ENCODE measurements at regions of chr14 and their contacts with region 1.

Region 1: GRCh38 chr14:77320238-77320935 is at the start of gene POMT2:
- DNase-seq: peak; percentile 87 to 94 (median 91)
- ATAC-seq: peak; percentile 71
- H3K4me3 ChIP-seq: peak within 1 kb of the TSS; percentile 97
- H3K4me3 Mint-ChIP-seq: peak within 1 kb of the TSS; percentile 94 to 99 (median 98)
- H3K27ac ChIP-seq: peak within 1 kb of the TSS; percentile 93
- H3K27ac Mint-ChIP-seq: peak within 1 kb of the TSS; percentile 95 to 99 (median 99)
- H3K4me1 ChIP-seq: peaks cover 0 to 6% of the 10 kb centered on the region in 2 donors
- H3K4me1 Mint-ChIP-seq: peaks cover 12 to 21% (median 16%) of the 10 kb centered on the region in 7 donors
- H3K27me3 ChIP-seq: no peaks in the 10 kb centered on the region
- H3K27me3 Mint-ChIP-seq: no peaks in the 10 kb centered on the region
- total RNA-seq, gene POMT2: 6.9 to 15.3 (median 9.4) TPM

Region 2: DNA sequence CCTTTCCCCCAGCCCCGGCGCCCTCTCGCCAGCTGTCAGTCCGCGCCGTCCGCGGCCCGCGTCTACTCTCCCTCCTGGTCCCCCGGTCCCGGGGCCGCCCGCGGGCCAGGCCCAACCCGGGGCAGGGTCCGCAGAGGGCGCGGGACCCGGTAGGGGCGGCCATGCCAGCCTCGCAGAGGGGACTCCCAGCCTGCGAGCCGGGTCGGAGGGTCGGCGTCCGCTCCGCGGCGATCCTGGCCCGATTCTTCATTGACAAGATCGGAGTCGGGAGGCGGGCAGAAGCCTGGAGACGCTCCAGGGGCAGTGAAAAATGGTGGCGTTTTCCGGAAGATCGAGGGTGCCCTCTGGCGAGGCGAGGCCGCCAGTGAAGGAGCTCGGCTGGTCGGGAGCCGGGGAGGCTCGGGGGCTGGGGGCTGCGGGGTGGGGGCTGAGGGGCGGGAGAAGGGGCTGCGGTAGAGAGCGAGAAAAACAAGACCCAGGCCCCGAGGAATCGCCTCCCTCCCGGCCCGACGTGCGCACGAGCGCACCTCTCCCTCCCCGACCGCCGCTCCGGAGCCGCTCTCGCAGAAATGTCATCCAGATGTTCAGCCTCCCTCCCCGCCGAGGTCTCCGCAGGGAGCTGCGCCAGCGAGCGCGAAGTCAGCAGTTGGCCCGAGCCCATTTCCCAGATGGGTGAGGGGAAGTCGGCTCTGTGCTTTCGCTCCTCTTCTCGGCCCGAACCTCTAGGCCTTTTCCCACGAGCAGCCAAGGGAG is 1337.9 kb before region 1 on chr14:
- CTCF ChIA-PET with region 1: no interaction called
- POLR2A ChIA-PET with region 1: no interaction called
- intact Hi-C with region 1: loop called in 1 of 2 experiments (anchors 1 kb)
- DNase-seq: peak; percentile 69 to 83 (median 80)
- ATAC-seq: peak; percentile 83
- H3K4me3 ChIP-seq: peak overlapping the region; percentile 83
- H3K4me3 Mint-ChIP-seq: peak overlapping the region; percentile 80 to 99 (median 88)
- H3K27ac ChIP-seq: peak overlapping the region; percentile 84
- H3K27ac Mint-ChIP-seq: peak overlapping the region; percentile 58 to 97 (median 90)
- H3K4me1 ChIP-seq: peaks cover 18 to 32% of the 10 kb centered on the region in 2 donors
- H3K4me1 Mint-ChIP-seq: peaks cover 43 to 64% (median 56%) of the 10 kb centered on the region in 7 donors
- H3K27me3 ChIP-seq: no peaks in the 10 kb centered on the region
- H3K27me3 Mint-ChIP-seq: peaks cover 0 to 24% (median 0%) of the 10 kb centered on the region in 5 donors

Region 3: GRCh38 chr14:76876076-76876475 is 444.3 kb before region 1 on chr14:
- CTCF ChIA-PET with region 1: interaction called, 7 read pairs
- POLR2A ChIA-PET with region 1: no interaction called
- intact Hi-C with region 1: loop called in 1 of 2 experiments (anchors 1 kb)
- DNase-seq: peak in 7 of 9 donors; percentile 23 to 50 (median 37)
- ATAC-seq: peak; percentile 73
- H3K4me3 ChIP-seq: no peak overlapping the region
- H3K4me3 Mint-ChIP-seq: no peak overlapping the region
- H3K27ac ChIP-seq: no peak overlapping the region
- H3K27ac Mint-ChIP-seq: peak overlapping the region in 1 of 9 donors; percentile 69
- H3K4me1 ChIP-seq: no peaks in the 10 kb centered on the region
- H3K4me1 Mint-ChIP-seq: peaks cover 0 to 3% (median 0%) of the 10 kb centered on the region in 7 donors
- H3K27me3 ChIP-seq: no peaks in the 10 kb centered on the region
- H3K27me3 Mint-ChIP-seq: no peaks in the 10 kb centered on the region

Region 4: GRCh38 chr14:77028384-77029231 is 291.8 kb before region 1 on chr14 and contains the start of gene IRF2BPL:
- CTCF ChIA-PET with region 1: no interaction called
- POLR2A ChIA-PET with region 1: interaction called, 6 read pairs
- intact Hi-C with region 1: loop called in 1 of 2 experiments (anchors 1 kb)
- DNase-seq: peak; percentile 90 to 96 (median 94)
- ATAC-seq: peak; percentile 82
- H3K4me3 ChIP-seq: peak within 1 kb of the TSS; percentile 81
- H3K4me3 Mint-ChIP-seq: peak within 1 kb of the TSS; percentile 93 to 99 (median 98)
- H3K27ac ChIP-seq: peak within 1 kb of the TSS; percentile 98
- H3K27ac Mint-ChIP-seq: peak within 1 kb of the TSS; percentile 97 to 100 (median 99)
- H3K4me1 ChIP-seq: peaks cover 43 to 57% of the 10 kb centered on the region in 2 donors
- H3K4me1 Mint-ChIP-seq: peaks cover 33 to 65% (median 58%) of the 10 kb centered on the region in 7 donors
- H3K27me3 ChIP-seq: no peaks in the 10 kb centered on the region
- H3K27me3 Mint-ChIP-seq: no peaks in the 10 kb centered on the region
- total RNA-seq, gene IRF2BPL: 30.2 to 45.2 (median 34.6) TPM

Region 5: DNA sequence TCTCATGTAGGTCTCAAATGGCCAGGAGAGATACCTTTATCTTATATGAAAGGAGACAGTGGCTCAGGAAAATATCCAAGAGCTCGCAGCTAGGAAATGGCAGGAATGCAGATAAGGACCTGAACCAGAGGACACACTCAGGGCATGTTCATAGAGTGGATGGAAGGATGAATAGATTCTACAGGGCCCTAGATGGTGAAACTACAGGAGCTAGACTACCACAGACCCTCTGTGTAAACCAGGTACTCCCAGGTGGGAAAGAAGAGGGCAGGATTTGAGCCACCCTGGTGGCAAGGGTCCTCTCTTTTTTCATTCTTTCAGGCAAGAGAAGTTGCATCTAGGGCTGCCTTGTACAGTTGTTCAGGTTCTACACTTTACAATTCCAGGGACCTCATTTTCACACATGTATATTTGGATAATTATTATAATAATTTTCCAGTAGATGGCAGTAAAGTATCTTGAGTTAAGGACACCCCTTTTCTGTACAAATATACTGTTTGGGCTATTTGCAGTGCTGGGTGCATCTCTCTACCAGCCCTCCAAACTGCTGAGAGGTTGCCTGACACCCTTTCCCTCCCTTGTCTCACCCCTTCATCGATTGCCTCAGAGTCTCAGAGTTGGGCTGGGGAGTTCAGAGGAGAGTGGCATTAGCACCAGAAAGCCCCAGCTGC is 168.3 kb before region 1 on chr14:
- CTCF ChIA-PET with region 1: interaction called, 5 read pairs
- POLR2A ChIA-PET with region 1: no interaction called
- intact Hi-C with region 1: loop called (anchors 1 kb)
- DNase-seq: peak in 3 of 9 donors; percentile 9 to 18 (median 10)
- ATAC-seq: peak; percentile 57
- H3K4me3 ChIP-seq: no peak overlapping the region
- H3K4me3 Mint-ChIP-seq: no peak overlapping the region
- H3K27ac ChIP-seq: no peak overlapping the region
- H3K27ac Mint-ChIP-seq: no peak overlapping the region
- H3K4me1 ChIP-seq: no peaks in the 10 kb centered on the region
- H3K4me1 Mint-ChIP-seq: no peaks in the 10 kb centered on the region
- H3K27me3 ChIP-seq: peaks cover 0 to 9% of the 10 kb centered on the region in 2 donors
- H3K27me3 Mint-ChIP-seq: peaks cover 35 to 55% (median 46%) of the 10 kb centered on the region in 5 donors

Region 6: GRCh38 chr14:77270361-77271112 is 49.9 kb before region 1 on chr14:
- CTCF ChIA-PET with region 1: no interaction called
- POLR2A ChIA-PET with region 1: no interaction called
- intact Hi-C with region 1: no loop called
- DNase-seq: no peak
- ATAC-seq: no peak
- H3K4me3 ChIP-seq: no peak overlapping the region
- H3K4me3 Mint-ChIP-seq: no peak overlapping the region
- H3K27ac ChIP-seq: no peak overlapping the region
- H3K27ac Mint-ChIP-seq: no peak overlapping the region
- H3K4me1 ChIP-seq: no peaks in the 10 kb centered on the region
- H3K4me1 Mint-ChIP-seq: peaks cover 0 to 5% (median 3%) of the 10 kb centered on the region in 7 donors
- H3K27me3 ChIP-seq: no peaks in the 10 kb centered on the region
- H3K27me3 Mint-ChIP-seq: peaks cover 18 to 54% (median 40%) of the 10 kb centered on the region in 5 donors

Region 7: GRCh38 chr14:77457522-77458290 is 137.3 kb after region 1 on chr14 and contains the starts of genes AHSA1 and VIPAS39:
- CTCF ChIA-PET with region 1: interaction called, 6 read pairs
- POLR2A ChIA-PET with region 1: interaction called, 3 read pairs
- intact Hi-C with region 1: loop called (anchors 1 kb)
- DNase-seq: peak; percentile 67 to 98 (median 96)
- ATAC-seq: peak; percentile 98
- H3K4me3 ChIP-seq: peak within 1 kb of the TSS; percentile 100
- H3K4me3 Mint-ChIP-seq: peak within 1 kb of the TSS; percentile 96 to 100 (median 100)
- H3K27ac ChIP-seq: peak within 1 kb of the TSS; percentile 82
- H3K27ac Mint-ChIP-seq: peak within 1 kb of the TSS; percentile 94 to 100 (median 99)
- H3K4me1 ChIP-seq: peaks cover 20 to 26% of the 10 kb centered on the region in 2 donors
- H3K4me1 Mint-ChIP-seq: peaks cover 22 to 67% (median 53%) of the 10 kb centered on the region in 7 donors
- H3K27me3 ChIP-seq: no peaks in the 10 kb centered on the region
- H3K27me3 Mint-ChIP-seq: no peaks in the 10 kb centered on the region
- total RNA-seq, gene AHSA1: 51.6 to 176 (median 103) TPM
- total RNA-seq, gene VIPAS39: 12.1 to 21.2 (median 20.5) TPM

Region 8: GRCh38 chr14:77593501-77593961 is 273.1 kb after region 1 on chr14:
- CTCF ChIA-PET with region 1: no interaction called
- POLR2A ChIA-PET with region 1: no interaction called
- intact Hi-C with region 1: no loop called
- DNase-seq: peak in 6 of 9 donors; percentile 30 to 71 (median 68)
- ATAC-seq: peak; percentile 86
- H3K4me3 ChIP-seq: peak overlapping the region; percentile 15
- H3K4me3 Mint-ChIP-seq: peak overlapping the region; percentile 61 to 89 (median 80)
- H3K27ac ChIP-seq: peak overlapping the region; percentile 56
- H3K27ac Mint-ChIP-seq: peak overlapping the region; percentile 83 to 93 (median 89)
- H3K4me1 ChIP-seq: peaks cover 13 to 43% of the 10 kb centered on the region in 2 donors
- H3K4me1 Mint-ChIP-seq: peaks cover 29 to 72% (median 62%) of the 10 kb centered on the region in 7 donors
- H3K27me3 ChIP-seq: no peaks in the 10 kb centered on the region
- H3K27me3 Mint-ChIP-seq: no peaks in the 10 kb centered on the region

Region 9: DNA sequence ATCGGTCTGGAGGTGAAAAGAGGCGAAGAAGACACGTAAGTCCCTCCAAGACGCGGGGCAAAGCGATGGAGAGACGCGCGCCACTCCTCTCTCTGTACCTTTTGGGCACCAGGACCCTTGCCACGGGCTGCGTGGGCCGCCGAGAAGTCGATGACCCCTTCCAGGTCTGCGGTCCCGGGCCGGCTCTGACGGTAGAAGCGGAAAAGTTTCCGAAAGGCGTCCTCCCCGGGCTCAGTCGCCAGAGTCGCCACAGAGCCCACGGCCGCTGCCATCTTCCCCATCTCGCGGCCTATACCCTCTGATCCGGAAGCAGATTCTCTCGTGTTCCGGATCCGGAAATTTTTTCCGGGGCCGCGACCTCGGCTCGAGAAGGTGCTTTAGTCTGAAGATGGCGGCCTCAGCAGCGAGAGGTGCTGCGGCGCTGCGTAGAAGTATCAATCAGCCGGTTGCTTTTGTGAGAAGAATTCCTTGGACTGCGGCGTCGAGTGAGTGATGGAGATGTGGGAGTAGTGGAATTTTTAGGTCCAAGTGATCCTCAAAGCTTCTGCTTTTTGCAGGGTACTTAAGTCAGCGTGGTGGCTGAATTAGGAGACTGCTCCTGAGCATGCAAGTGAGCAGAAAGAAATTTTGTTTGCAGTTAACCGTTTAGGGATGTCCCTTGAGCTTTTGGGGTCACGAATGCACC is 387.5 kb after region 1 on chr14 and contains the starts of genes ALKBH1 and SLIRP:
- CTCF ChIA-PET with region 1: no interaction called
- POLR2A ChIA-PET with region 1: no interaction called
- intact Hi-C with region 1: loop called (anchors 1 kb)
- DNase-seq: peak; percentile 73 to 91 (median 87)
- ATAC-seq: peak; percentile 98
- H3K4me3 ChIP-seq: peak within 1 kb of the TSS; percentile 88
- H3K4me3 Mint-ChIP-seq: peak within 1 kb of the TSS; percentile 86 to 98 (median 94)
- H3K27ac ChIP-seq: peak within 1 kb of the TSS; percentile 79
- H3K27ac Mint-ChIP-seq: peak within 1 kb of the TSS; percentile 91 to 99 (median 94)
- H3K4me1 ChIP-seq: peaks cover 22 to 24% of the 10 kb centered on the region in 2 donors
- H3K4me1 Mint-ChIP-seq: peaks cover 26 to 58% (median 44%) of the 10 kb centered on the region in 7 donors
- H3K27me3 ChIP-seq: no peaks in the 10 kb centered on the region
- H3K27me3 Mint-ChIP-seq: no peaks in the 10 kb centered on the region
- total RNA-seq, gene ALKBH1: 10.2 to 20.3 (median 14.1) TPM
- total RNA-seq, gene SLIRP: 35.9 to 66.6 (median 45.5) TPM